ENCODE measurements at regions of chr7 and their contacts with region 1.

Region 1: GRCh38 chr7:37495574-37496184 is 47.0 kb upstream of the ELMO1 start:
- DNase-seq: no peak
- H3K4me3 Mint-ChIP-seq: no peak overlapping the region
- H3K27ac Mint-ChIP-seq: no peak overlapping the region
- H3K4me1 Mint-ChIP-seq: peaks cover 11% of the 10 kb centered on the region
- H3K27me3 Mint-ChIP-seq: no peaks in the 10 kb centered on the region

Region 2: GRCh38 chr7:37208528-37208927 is 287.2 kb before region 1 on chr7:
- intact Hi-C with region 1: loop called (anchors 5 kb)
- DNase-seq: peak; percentile 19
- H3K4me3 Mint-ChIP-seq: no peak overlapping the region
- H3K27ac Mint-ChIP-seq: peak overlapping the region; percentile 65
- H3K4me1 Mint-ChIP-seq: peaks cover 21% of the 10 kb centered on the region
- H3K27me3 Mint-ChIP-seq: no peaks in the 10 kb centered on the region

Region 3: GRCh38 chr7:37234928-37235327 is 260.8 kb before region 1 on chr7:
- intact Hi-C with region 1: loop called (anchors 10 kb)
- DNase-seq: no peak
- H3K4me3 Mint-ChIP-seq: no peak overlapping the region
- H3K27ac Mint-ChIP-seq: no peak overlapping the region
- H3K4me1 Mint-ChIP-seq: peaks cover 14% of the 10 kb centered on the region
- H3K27me3 Mint-ChIP-seq: no peaks in the 10 kb centered on the region

Measured in activated T-helper 2 cell treated with anti-CD3 and anti-CD28 coated beads, Interferon-gamma antibody, Interleukin-2, Interleukin-4, amounts not matched to agents 10 μg/mL and 5 μg/mL and 100 μg/mL, durations not matched to agents 14 hours and 24 hours and 36 hours (primary cell).